Breast epithelium (tissue), 4 donors: ENCODE measurements at regions of chr15 and their contacts with region 1.

Region 1: GRCh38 chr15:56877255-56877970 is 41.0 kb upstream of the TCF12 start:
- DNase-seq: no peak
- H3K4me3 ChIP-seq: no peak overlapping the region
- H3K27ac ChIP-seq: no peak overlapping the region
- H3K4me1 ChIP-seq: no peaks in the 10 kb centered on the region
- H3K27me3 ChIP-seq: no peaks in the 10 kb centered on the region
- CTCF ChIP-seq: no peak
- POLR2A ChIP-seq: no peak

Region 2: GRCh38 chr15:56532721-56533460 is 344.5 kb before region 1 on chr15:
- intact Hi-C with region 1: loop called (anchors 5 kb)
- DNase-seq: no peak
- H3K4me3 ChIP-seq: no peak overlapping the region
- H3K27ac ChIP-seq: no peak overlapping the region
- H3K4me1 ChIP-seq: no peaks in the 10 kb centered on the region
- H3K27me3 ChIP-seq: no peaks in the 10 kb centered on the region
- CTCF ChIP-seq: no peak
- POLR2A ChIP-seq: no peak

Region 3: GRCh38 chr15:56805466-56806146 is 71.8 kb before region 1 on chr15:
- intact Hi-C with region 1: no loop called
- DNase-seq: no peak
- H3K4me3 ChIP-seq: peak overlapping the region in 2 of 3 donors; percentile 5 to 10
- H3K27ac ChIP-seq: no peak overlapping the region
- H3K4me1 ChIP-seq: no peaks in the 10 kb centered on the region
- H3K27me3 ChIP-seq: no peaks in the 10 kb centered on the region
- CTCF ChIP-seq: no peak
- POLR2A ChIP-seq: no peak